Psoas muscle (tissue), 8 donors: ENCODE measurements at regions of chr20 and their contacts with region 1.

Region 1: GRCh38 chr20:22861229-22861980 is 173.7 kb upstream of the SSTR4 start:
- DNase-seq: no peak
- ATAC-seq: no peak
- H3K4me3 ChIP-seq: no peak overlapping the region
- H3K27ac ChIP-seq: no peak overlapping the region
- H3K4me1 ChIP-seq: no peaks in the 10 kb centered on the region
- H3K27me3 ChIP-seq: peaks cover 0 to 4% (median 2%) of the 10 kb centered on the region in 3 donors
- CTCF ChIP-seq: no peak

Region 2: DNA sequence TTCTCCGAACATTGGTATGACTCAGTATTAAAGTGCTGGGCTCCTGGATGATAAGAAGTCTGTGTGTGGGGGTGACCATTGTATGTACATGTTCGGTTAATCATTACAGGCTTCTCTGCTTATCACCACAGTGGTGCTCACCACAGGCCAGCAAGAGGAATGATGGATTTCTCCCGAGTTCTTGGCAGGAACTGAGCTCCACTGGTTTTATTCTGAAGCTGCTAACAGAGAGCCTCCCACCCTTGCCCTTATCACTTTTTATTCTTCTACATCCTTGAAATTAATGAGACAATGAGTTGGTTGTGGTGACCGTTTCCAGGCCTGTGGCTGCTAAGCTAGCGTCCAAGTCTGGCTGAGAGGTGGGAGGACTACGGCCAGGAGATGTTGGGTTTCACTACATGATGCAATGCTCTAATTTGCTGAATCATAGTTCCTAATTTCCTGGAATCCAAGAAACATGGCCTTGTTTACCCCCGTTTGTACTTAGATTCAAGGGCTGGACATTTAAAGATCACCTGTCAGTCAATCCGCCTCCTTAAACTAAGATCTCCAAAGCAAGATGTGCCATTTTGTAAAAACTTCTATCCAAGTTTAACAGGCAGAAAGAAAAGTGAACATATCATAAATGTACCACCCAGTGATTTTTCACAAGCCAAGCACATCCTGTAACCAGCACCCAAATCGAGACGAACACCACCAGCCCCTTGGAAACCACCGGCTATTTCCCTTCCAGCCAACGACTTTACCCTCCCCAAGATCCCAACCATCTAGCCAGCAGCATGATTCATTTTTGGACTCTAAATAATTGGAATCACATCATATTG is 449.6 kb before region 1 on chr20:
- intact Hi-C with region 1: no loop called
- DNase-seq: peak; percentile 40 to 56
- ATAC-seq: peak; percentile 32 to 69 (median 58)
- H3K4me3 ChIP-seq: no peak overlapping the region
- H3K27ac ChIP-seq: no peak overlapping the region
- H3K4me1 ChIP-seq: no peaks in the 10 kb centered on the region
- H3K27me3 ChIP-seq: peaks cover 0 to 8% (median 2%) of the 10 kb centered on the region in 3 donors
- CTCF ChIP-seq: no peak

Region 3: DNA sequence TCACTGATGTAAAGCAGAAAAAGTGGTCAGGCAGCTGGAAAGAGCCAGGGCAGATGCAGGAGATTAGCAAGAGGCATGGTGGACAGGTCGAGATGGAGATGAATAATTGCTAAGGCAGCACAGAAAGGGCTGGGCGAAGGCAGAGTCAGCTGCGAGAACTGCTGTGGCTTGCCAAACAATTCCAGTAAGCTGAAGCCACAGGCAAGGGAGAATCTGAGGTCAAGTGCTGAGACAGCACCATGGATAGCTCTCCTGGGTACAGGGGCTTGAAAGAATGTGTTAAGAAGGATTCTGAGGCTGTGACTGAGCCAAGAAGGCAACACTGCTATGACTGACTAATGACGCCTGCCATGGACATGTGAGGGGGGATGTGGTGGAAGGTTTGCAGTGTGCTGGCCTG is 56.2 kb before region 1 on chr20:
- intact Hi-C with region 1: loop called in 1 of 2 experiments (anchors 10 kb)
- DNase-seq: peak; percentile 29 to 58
- ATAC-seq: peak; percentile 55 to 89 (median 70)
- H3K4me3 ChIP-seq: no peak overlapping the region
- H3K27ac ChIP-seq: no peak overlapping the region
- H3K4me1 ChIP-seq: no peaks in the 10 kb centered on the region
- H3K27me3 ChIP-seq: no peaks in the 10 kb centered on the region
- CTCF ChIP-seq: no peak